ENCODE measurements at regions of chr1 and their contacts with region 1.

Region 1: GRCh38 chr1:198352975-198353695 is 187.3 kb downstream of the ATP6V1G3 start:
- DNase-seq: no peak
- ATAC-seq: no peak
- H3K4me3 ChIP-seq: no peak overlapping the region
- H3K4me3 Mint-ChIP-seq: no peak overlapping the region
- H3K27ac ChIP-seq: no peak overlapping the region
- H3K27ac Mint-ChIP-seq: no peak overlapping the region
- H3K4me1 ChIP-seq: no peaks in the 10 kb centered on the region
- H3K4me1 Mint-ChIP-seq: no peaks in the 10 kb centered on the region
- H3K27me3 ChIP-seq: no peaks in the 10 kb centered on the region
- H3K27me3 Mint-ChIP-seq: no peaks in the 10 kb centered on the region

Region 2: DNA sequence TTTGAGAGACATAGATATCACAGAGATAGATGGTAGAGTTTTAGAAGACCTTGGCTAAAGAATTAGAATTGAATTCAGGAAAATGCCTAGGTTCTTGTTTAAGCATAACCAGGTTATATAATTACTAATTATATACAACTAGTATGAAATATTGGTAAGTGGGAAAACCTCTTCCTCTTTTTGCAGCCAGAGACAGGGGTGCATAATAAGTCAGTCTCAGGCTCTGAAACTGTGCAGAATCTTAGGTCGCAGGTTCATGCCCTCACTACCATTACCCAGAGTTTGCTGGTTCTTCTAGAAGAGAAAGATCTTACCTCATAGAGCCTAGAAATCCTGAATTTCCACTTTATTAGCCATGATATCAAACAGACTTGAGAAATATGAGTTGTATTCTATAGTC is 13.0 kb before region 1 on chr1:
- CTCF ChIA-PET with region 1: interaction called in 1 of 2 experiments, 14 read pairs
- POLR2A ChIA-PET with region 1: no interaction called
- DNase-seq: no peak
- ATAC-seq: no peak
- H3K4me3 ChIP-seq: no peak overlapping the region
- H3K4me3 Mint-ChIP-seq: no peak overlapping the region
- H3K27ac ChIP-seq: no peak overlapping the region
- H3K27ac Mint-ChIP-seq: no peak overlapping the region
- H3K4me1 ChIP-seq: no peaks in the 10 kb centered on the region
- H3K4me1 Mint-ChIP-seq: no peaks in the 10 kb centered on the region
- H3K27me3 ChIP-seq: peaks cover 0 to 6% of the 10 kb centered on the region in 2 experiments
- H3K27me3 Mint-ChIP-seq: peaks cover 0 to 6% of the 10 kb centered on the region in 2 donors

Measured in T-cell (primary cell).